SK-N-SH (cell line): ENCODE measurements at regions of chr2 and their contacts with region 1.

Region 1: GRCh38 chr2:109545828-109546713 is 67.7 kb downstream of the SEPTIN10 start:
- DNase-seq: peak; percentile 59
- H3K4me3 ChIP-seq: no peak overlapping the region; a peak in 1 of 4 replicates
- H3K27ac ChIP-seq: no peak overlapping the region
- H3K4me1 ChIP-seq: peaks cover 0 to 4% of the 10 kb centered on the region in 2 experiments; a peak in 3 of 4 replicates
- H3K27me3 ChIP-seq: no peaks in the 10 kb centered on the region
- CTCF ChIP-seq: peak; percentile 98
- EP300 ChIP-seq: no peak
- RAD21 ChIP-seq: peak; percentile 92

Region 2: DNA sequence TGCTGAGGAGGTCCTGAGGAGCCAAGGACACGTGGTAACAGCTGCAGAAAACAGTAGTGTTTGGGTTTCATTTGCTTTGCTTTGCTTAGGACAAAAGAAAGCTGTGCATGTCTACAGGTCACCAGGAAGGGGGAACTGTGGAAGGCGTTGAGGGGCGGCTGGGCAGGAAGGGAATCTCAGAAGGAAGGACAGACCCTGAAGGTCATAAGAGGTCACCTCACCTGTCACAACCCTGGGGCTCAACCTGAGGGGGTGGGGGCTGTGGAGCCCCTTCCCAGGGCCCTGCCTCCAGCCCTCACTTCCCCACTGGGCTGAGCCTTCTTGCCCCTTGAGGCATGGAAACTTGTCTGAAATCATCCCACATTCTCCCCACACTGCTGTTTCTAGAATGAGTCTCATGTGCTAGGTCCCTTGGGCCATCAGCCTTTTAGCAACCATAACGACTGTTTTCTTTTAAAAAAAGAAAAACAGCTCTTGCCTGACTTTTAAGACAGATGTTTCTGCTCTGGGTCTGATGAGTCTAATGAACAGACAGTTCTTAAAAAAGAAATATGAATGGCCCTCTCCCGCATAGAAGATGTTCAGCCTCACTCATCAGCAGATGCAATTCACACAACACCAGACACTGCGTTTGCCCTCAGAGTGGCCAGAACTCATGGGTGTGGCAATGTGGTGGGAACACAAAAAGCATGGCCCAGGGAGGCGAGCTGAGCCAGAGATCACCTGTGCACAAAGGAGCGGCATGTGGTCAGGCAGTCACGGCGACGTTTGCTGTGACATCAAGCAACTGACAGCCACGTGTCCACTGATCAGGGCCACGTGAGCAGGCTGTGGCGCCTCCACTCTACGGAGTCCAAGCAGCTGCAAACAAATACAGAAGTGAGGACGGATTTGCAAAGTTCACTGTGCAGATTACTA is 16.3 kb before region 1 on chr2:
- CTCF ChIA-PET with region 1: interaction called, 89 read pairs
- POLR2A ChIA-PET with region 1: no interaction called
- DNase-seq: no peak
- H3K4me3 ChIP-seq: no peak overlapping the region
- H3K27ac ChIP-seq: no peak overlapping the region
- H3K4me1 ChIP-seq: peaks cover 0 to 10% of the 10 kb centered on the region in 2 experiments; a peak in 1 of 4 replicates
- H3K27me3 ChIP-seq: no peaks in the 10 kb centered on the region
- CTCF ChIP-seq: no peak
- EP300 ChIP-seq: no peak
- RAD21 ChIP-seq: no peak

Region 3: GRCh38 chr2:109563980-109564550 is 18.0 kb after region 1 on chr2:
- CTCF ChIA-PET with region 1: interaction called, 38 read pairs
- POLR2A ChIA-PET with region 1: no interaction called
- DNase-seq: no peak
- H3K4me3 ChIP-seq: no peak overlapping the region
- H3K27ac ChIP-seq: peak overlapping the region in 1 of 2 experiments; percentile 10; a peak in 2 of 4 replicates
- H3K4me1 ChIP-seq: peaks cover 0 to 5% of the 10 kb centered on the region in 2 experiments; a peak in 1 of 4 replicates
- H3K27me3 ChIP-seq: no peaks in the 10 kb centered on the region
- CTCF ChIP-seq: no peak
- EP300 ChIP-seq: no peak
- RAD21 ChIP-seq: no peak

Region 4: GRCh38 chr2:109613922-109614714 is 68.0 kb after region 1 on chr2 and contains the starts of genes SEPTIN10 and SOWAHC:
- CTCF ChIA-PET with region 1: interaction called, 14 read pairs
- POLR2A ChIA-PET with region 1: no interaction called
- DNase-seq: peak; percentile 98
- H3K4me3 ChIP-seq: peak within 1 kb of the TSS; percentile 81 to 84
- H3K27ac ChIP-seq: peak within 1 kb of the TSS; percentile 90 to 92
- H3K4me1 ChIP-seq: peaks cover 16 to 26% of the 10 kb centered on the region in 2 experiments; a peak in 3 of 4 replicates
- H3K27me3 ChIP-seq: no peaks in the 10 kb centered on the region
- CTCF ChIP-seq: no peak
- EP300 ChIP-seq: no peak; a peak in 1 of 4 replicates
- RAD21 ChIP-seq: no peak
- polyA plus RNA-seq, gene SEPTIN10: 39.1 and 46.5 TPM in 2 replicates
- polyA plus RNA-seq, gene SOWAHC: 2.4 and 2.9 TPM in 2 replicates

Region 5: DNA sequence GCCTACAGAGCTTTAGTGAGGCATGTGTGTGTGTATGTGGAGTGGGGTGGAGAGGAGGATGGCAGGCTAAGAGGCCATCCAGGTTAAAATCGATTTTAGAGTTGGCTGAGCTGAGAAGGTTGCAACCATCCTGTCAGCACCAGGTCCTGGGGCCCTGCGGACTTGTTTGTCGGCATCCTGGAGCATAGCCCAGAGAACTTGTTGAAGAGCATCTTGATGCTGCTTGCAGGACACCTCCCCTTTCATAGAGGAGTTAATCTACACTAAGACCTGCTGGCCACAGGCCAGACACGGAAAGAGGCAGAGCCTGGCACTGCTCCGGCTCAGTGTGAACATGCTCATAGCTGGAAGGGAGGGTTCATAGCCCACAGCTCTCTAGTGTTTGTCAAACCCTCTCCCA is 176.0 kb after region 1 on chr2:
- CTCF ChIA-PET with region 1: interaction called, 10 read pairs
- POLR2A ChIA-PET with region 1: no interaction called
- DNase-seq: no peak
- H3K4me3 ChIP-seq: no peak overlapping the region
- H3K27ac ChIP-seq: no peak overlapping the region
- H3K4me1 ChIP-seq: no peaks in the 10 kb centered on the region
- H3K27me3 ChIP-seq: no peaks in the 10 kb centered on the region
- CTCF ChIP-seq: no peak
- EP300 ChIP-seq: no peak
- RAD21 ChIP-seq: no peak